GM10248 (cell line): ENCODE measurements at regions of chr3 and their contacts with region 1.

Region 1: DNA sequence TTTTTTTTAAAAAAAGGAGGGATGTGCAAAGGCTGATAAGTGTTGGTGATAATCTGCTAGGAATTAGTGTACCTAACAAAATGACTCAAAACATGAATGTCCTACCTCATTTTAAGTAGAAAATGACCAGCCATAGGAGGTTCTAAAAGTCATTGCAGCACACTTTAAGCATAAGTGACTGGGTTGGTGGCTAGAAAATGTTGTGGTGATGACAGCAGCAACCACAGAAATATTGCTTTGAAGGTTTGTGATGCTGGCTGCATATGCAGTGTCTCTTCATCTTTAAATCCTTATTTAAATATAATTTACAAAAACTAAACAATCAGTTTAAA is 55.2 kb downstream of the CMSS1 start:
- DNase-seq: peak; percentile 38
- CTCF ChIP-seq: no peak

Region 2: GRCh38 chr3:99789011-99789721 is 83.7 kb before region 1 on chr3:
- CTCF ChIA-PET with region 1: no interaction called
- POLR2A ChIA-PET with region 1: no interaction called
- DNase-seq: peak; percentile 37
- CTCF ChIP-seq: peak; percentile 63

Region 3: DNA sequence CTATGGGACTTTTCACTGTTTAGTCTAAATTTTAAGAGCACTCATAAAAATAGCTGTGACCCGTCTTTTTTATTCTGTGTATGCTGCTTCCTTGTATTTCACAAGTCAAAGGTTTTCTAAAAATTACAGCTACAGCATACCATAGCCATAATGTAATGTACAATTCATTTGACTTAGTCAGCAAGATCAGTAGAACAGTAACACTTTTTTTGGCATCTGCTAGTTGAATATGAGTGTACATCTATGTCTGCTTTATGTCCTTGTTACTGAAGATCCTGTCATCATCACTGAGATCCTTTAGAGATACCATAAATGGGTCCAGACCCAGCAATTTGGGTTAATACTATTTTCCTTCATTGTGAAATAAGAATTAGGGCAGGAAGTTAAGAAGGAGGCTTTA is 13.1 kb before region 1 on chr3:
- CTCF ChIA-PET with region 1: interaction called, 17 read pairs
- POLR2A ChIA-PET with region 1: no interaction called
- DNase-seq: no peak
- CTCF ChIP-seq: no peak